ENCODE measurements at regions of chr22 and their contacts with region 1.

Region 1: DNA sequence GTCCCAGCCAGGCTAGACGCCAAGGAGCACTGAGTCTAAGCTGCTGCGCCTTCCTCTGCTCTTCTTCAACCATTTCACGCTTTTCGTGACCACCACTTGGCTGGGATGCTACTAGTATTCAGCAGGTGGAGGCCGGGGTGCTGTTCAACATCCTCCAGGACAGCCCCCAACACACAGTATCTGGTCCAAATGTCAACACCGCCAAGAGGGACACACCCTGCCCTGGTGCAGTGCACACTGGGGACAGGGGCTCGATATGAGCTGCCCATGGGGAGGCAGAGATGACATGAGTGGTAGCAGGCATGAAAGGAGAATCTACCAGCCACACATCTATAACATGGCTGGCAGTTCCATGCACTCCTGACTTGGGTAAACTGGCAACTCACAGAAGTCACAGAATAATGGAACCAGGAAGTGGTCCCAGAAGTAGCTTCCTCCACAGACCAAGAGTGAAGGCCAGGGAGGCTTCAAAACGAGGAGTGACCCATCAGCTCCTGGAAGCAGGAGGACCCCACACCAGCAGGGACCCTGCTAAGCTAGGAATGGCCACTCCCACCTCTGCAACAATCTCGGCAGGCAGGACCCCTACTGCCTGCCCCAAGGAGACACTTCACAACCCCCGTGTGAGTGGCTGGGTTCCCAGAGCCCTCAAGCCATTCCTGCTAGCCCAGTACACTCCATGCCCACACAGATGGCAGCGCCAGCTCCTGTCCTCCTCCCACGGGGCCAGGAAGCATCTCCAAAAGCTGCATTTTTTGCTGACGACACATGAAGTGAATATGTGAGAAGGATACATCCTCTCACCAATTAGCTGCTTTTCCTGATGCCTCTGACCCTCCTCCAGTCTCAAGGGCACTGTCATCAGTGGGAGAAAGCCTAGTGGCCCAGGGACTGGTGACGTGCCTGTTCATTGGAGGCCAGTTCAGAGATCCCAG is 78.8 kb downstream of the DGCR2 start:
- DNase-seq: no peak
- ATAC-seq: no peak
- H3K4me3 Mint-ChIP-seq: no peak overlapping the region
- H3K27ac Mint-ChIP-seq: no peak overlapping the region
- H3K4me1 Mint-ChIP-seq: no peaks in the 10 kb centered on the region
- H3K27me3 Mint-ChIP-seq: no peaks in the 10 kb centered on the region

Region 2: GRCh38 chr22:18110194-18110953 is 933.0 kb before region 1 on chr22 and contains the start of gene TUBA8:
- CTCF ChIA-PET with region 1: no interaction called
- POLR2A ChIA-PET with region 1: no interaction called
- intact Hi-C with region 1: no loop called
- DNase-seq: peak; percentile 68
- ATAC-seq: peak; percentile 62
- H3K4me3 Mint-ChIP-seq: peak within 1 kb of the TSS; percentile 46
- H3K27ac Mint-ChIP-seq: no peak within 1 kb of the TSS
- H3K4me1 Mint-ChIP-seq: peaks cover 51% of the 10 kb centered on the region
- H3K27me3 Mint-ChIP-seq: peaks cover 39% of the 10 kb centered on the region
- total RNA-seq, gene TUBA8: 1.9 to 2.6 TPM

Region 3: GRCh38 chr22:19058713-19059451 is 15.5 kb after region 1 on chr22:
- CTCF ChIA-PET with region 1: interaction called, 4 read pairs
- POLR2A ChIA-PET with region 1: no interaction called
- intact Hi-C with region 1: loop called in 1 of 2 experiments (anchors 2 kb)
- DNase-seq: no peak
- ATAC-seq: no peak
- H3K4me3 Mint-ChIP-seq: no peak overlapping the region
- H3K27ac Mint-ChIP-seq: no peak overlapping the region
- H3K4me1 Mint-ChIP-seq: peaks cover 4% of the 10 kb centered on the region
- H3K27me3 Mint-ChIP-seq: no peaks in the 10 kb centered on the region

Region 4: GRCh38 chr22:19232623-19233022 is 189.2 kb after region 1 on chr22:
- CTCF ChIA-PET with region 1: no interaction called
- POLR2A ChIA-PET with region 1: no interaction called
- intact Hi-C with region 1: loop called in 1 of 2 experiments (anchors 10 kb)
- DNase-seq: no peak
- ATAC-seq: no peak
- H3K4me3 Mint-ChIP-seq: no peak overlapping the region
- H3K27ac Mint-ChIP-seq: no peak overlapping the region
- H3K4me1 Mint-ChIP-seq: no peaks in the 10 kb centered on the region
- H3K27me3 Mint-ChIP-seq: peaks cover 2% of the 10 kb centered on the region